CD4-positive, alpha-beta T cell (primary cell): ENCODE measurements at regions of chr14 and their contacts with region 1.

Region 1: GRCh38 chr14:70972107-70972976 is 65.1 kb downstream of the PCNX1 start:
- DNase-seq: peak; percentile 68 to 92 (median 82)
- ATAC-seq: peak; percentile 80
- H3K4me3 ChIP-seq: no peak overlapping the region
- H3K4me3 Mint-ChIP-seq: no peak overlapping the region
- H3K27ac ChIP-seq: peak overlapping the region in 1 of 2 donors; percentile 18
- H3K27ac Mint-ChIP-seq: peak overlapping the region; percentile 20
- H3K4me1 ChIP-seq: peaks cover 23% of the 10 kb centered on the region
- H3K4me1 Mint-ChIP-seq: peaks cover 56% of the 10 kb centered on the region
- H3K27me3 ChIP-seq: no peaks in the 10 kb centered on the region
- H3K27me3 Mint-ChIP-seq: no peaks in the 10 kb centered on the region
- CTCF ChIP-seq: peak; percentile 87

Region 2: GRCh38 chr14:69818757-69819191 is 1153.6 kb before region 1 on chr14:
- CTCF ChIA-PET with region 1: no interaction called
- POLR2A ChIA-PET with region 1: no interaction called
- intact Hi-C with region 1: loop called (anchors 5 kb)
- DNase-seq: peak in 13 of 14 experiments; percentile 11 to 81 (median 37)
- ATAC-seq: peak; percentile 77
- H3K4me3 ChIP-seq: no peak overlapping the region
- H3K4me3 Mint-ChIP-seq: no peak overlapping the region
- H3K27ac ChIP-seq: no peak overlapping the region
- H3K27ac Mint-ChIP-seq: no peak overlapping the region
- H3K4me1 ChIP-seq: peaks cover 5% of the 10 kb centered on the region
- H3K4me1 Mint-ChIP-seq: peaks cover 6% of the 10 kb centered on the region
- H3K27me3 ChIP-seq: no peaks in the 10 kb centered on the region
- H3K27me3 Mint-ChIP-seq: peaks cover 8% of the 10 kb centered on the region
- CTCF ChIP-seq: peak; percentile 83

Region 3: GRCh38 chr14:70162358-70162757 is 810.0 kb before region 1 on chr14:
- CTCF ChIA-PET with region 1: no interaction called
- POLR2A ChIA-PET with region 1: no interaction called
- intact Hi-C with region 1: no loop called
- DNase-seq: no peak
- ATAC-seq: no peak
- H3K4me3 ChIP-seq: no peak overlapping the region
- H3K4me3 Mint-ChIP-seq: no peak overlapping the region
- H3K27ac ChIP-seq: no peak overlapping the region
- H3K27ac Mint-ChIP-seq: no peak overlapping the region
- H3K4me1 ChIP-seq: no peaks in the 10 kb centered on the region
- H3K4me1 Mint-ChIP-seq: no peaks in the 10 kb centered on the region
- H3K27me3 ChIP-seq: peaks cover 3 to 6% of the 10 kb centered on the region in 2 experiments
- H3K27me3 Mint-ChIP-seq: peaks cover 19% of the 10 kb centered on the region
- CTCF ChIP-seq: no peak

Region 4: DNA sequence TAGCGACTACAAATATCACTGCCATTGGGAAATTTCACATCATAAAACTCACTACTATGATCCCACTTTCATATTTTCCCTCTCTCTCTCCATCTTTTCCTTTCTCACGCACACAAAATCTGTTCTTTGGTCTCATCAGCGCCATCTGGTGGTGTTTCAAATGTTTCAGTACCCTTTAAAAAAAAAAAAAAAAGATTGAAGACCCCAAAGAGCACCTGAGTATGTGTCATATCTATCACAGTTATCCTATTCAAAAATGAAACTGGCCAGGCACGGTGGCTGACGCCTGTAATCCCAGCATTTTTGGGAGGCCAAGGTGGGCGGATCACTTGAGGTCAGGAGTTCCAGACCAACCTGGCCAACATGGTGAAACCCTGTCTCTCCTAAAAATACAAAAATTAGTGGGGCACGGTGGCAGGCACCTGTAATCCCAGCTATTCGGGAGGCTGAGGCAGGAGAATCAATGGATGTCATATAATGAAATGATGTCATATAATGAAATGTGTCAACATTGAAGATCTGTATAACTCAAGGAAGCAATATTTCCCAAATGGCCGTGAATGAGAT is 258.2 kb before region 1 on chr14:
- CTCF ChIA-PET with region 1: no interaction called
- POLR2A ChIA-PET with region 1: no interaction called
- intact Hi-C with region 1: loop called in 1 of 2 experiments (anchors 5 kb)
- DNase-seq: peak in 12 of 14 experiments; percentile 12 to 84 (median 36)
- ATAC-seq: no peak
- H3K4me3 ChIP-seq: no peak overlapping the region
- H3K4me3 Mint-ChIP-seq: no peak overlapping the region
- H3K27ac ChIP-seq: no peak overlapping the region
- H3K27ac Mint-ChIP-seq: no peak overlapping the region
- H3K4me1 ChIP-seq: peaks cover 5% of the 10 kb centered on the region
- H3K4me1 Mint-ChIP-seq: peaks cover 5% of the 10 kb centered on the region
- H3K27me3 ChIP-seq: no peaks in the 10 kb centered on the region
- H3K27me3 Mint-ChIP-seq: no peaks in the 10 kb centered on the region
- CTCF ChIP-seq: peak; percentile 95

Region 5: GRCh38 chr14:70816525-70816924 is 155.8 kb before region 1 on chr14:
- CTCF ChIA-PET with region 1: interaction called, 21 read pairs
- POLR2A ChIA-PET with region 1: interaction called, 3 read pairs
- intact Hi-C with region 1: loop called (anchors 1 kb)
- DNase-seq: no peak
- ATAC-seq: no peak
- H3K4me3 ChIP-seq: no peak overlapping the region
- H3K4me3 Mint-ChIP-seq: no peak overlapping the region
- H3K27ac ChIP-seq: no peak overlapping the region
- H3K27ac Mint-ChIP-seq: no peak overlapping the region
- H3K4me1 ChIP-seq: peaks cover 5% of the 10 kb centered on the region
- H3K4me1 Mint-ChIP-seq: peaks cover 15% of the 10 kb centered on the region
- H3K27me3 ChIP-seq: peaks cover 5 to 7% of the 10 kb centered on the region in 2 experiments
- H3K27me3 Mint-ChIP-seq: peaks cover 28% of the 10 kb centered on the region
- CTCF ChIP-seq: no peak

Region 6: DNA sequence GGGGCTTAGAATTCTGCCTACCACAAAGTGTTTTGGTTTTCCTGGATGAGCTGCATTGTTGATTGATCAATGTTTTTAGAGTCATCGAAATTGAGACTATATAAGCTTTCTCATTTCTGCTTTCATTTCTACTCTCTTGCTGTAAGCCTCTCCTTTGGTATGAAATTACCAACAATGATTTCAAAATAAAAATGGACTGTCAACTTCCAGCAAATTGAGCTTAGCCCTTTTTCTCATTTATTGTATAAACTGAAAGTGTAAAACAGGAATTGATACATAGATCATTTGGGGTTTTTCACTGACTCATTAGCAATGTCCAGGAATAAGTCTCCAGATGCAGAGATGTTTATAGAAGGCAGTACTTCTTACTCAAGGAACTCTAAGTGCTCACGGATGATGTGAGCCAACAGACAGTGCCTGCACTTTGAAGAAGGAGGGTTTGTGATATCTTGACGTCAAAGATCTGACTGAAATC is 85.1 kb before region 1 on chr14:
- CTCF ChIA-PET with region 1: interaction called, 10 read pairs
- POLR2A ChIA-PET with region 1: no interaction called
- intact Hi-C with region 1: no loop called
- DNase-seq: peak in 3 of 14 experiments; percentile 33 to 59 (median 46)
- ATAC-seq: peak; percentile 52
- H3K4me3 ChIP-seq: peak overlapping the region; percentile 2
- H3K4me3 Mint-ChIP-seq: peak overlapping the region; percentile 65
- H3K27ac ChIP-seq: peak overlapping the region in 1 of 2 donors; percentile 52
- H3K27ac Mint-ChIP-seq: peak overlapping the region; percentile 87
- H3K4me1 ChIP-seq: peaks cover 68% of the 10 kb centered on the region
- H3K4me1 Mint-ChIP-seq: peaks cover 87% of the 10 kb centered on the region
- H3K27me3 ChIP-seq: no peaks in the 10 kb centered on the region
- H3K27me3 Mint-ChIP-seq: no peaks in the 10 kb centered on the region
- CTCF ChIP-seq: no peak

Region 7: GRCh38 chr14:70999117-70999516 is 26.8 kb after region 1 on chr14:
- CTCF ChIA-PET with region 1: interaction called, 11 read pairs
- POLR2A ChIA-PET with region 1: interaction called, 3 read pairs
- intact Hi-C with region 1: no loop called
- DNase-seq: peak in 3 of 14 experiments; percentile 52 to 85 (median 56)
- ATAC-seq: peak; percentile 89
- H3K4me3 ChIP-seq: peak overlapping the region; percentile 10
- H3K4me3 Mint-ChIP-seq: peak overlapping the region; percentile 56
- H3K27ac ChIP-seq: peak overlapping the region; percentile 42 to 64
- H3K27ac Mint-ChIP-seq: peak overlapping the region; percentile 79
- H3K4me1 ChIP-seq: peaks cover 25% of the 10 kb centered on the region
- H3K4me1 Mint-ChIP-seq: peaks cover 89% of the 10 kb centered on the region
- H3K27me3 ChIP-seq: no peaks in the 10 kb centered on the region
- H3K27me3 Mint-ChIP-seq: no peaks in the 10 kb centered on the region
- CTCF ChIP-seq: no peak

Region 8: DNA sequence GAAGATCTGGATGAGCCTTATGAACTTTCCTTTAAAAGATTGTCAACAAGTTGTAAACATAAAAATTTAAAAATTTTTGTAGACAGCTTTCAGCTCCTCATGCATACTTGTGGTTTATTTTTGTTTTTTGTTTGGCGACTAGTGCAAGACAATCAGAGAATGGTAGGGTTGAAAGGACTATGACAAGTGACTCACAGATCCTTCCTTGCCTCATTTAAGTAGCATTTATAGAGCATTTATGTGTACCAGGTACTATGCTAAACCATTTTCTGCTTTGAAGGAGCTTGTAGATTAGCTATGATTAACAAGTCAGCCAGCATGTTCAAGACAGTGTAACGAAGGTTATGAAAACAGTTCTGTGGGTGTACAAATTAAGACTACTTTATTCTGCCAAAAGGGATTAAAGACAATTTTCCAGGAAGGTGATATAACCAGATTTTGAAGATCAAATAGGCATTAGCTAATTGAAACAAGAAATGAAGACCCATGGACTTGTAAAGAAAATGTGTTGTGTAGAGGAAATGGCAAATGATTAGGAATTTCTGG is 57.0 kb after region 1 on chr14:
- CTCF ChIA-PET with region 1: no interaction called
- POLR2A ChIA-PET with region 1: no interaction called
- intact Hi-C with region 1: no loop called
- DNase-seq: no peak
- ATAC-seq: no peak
- H3K4me3 ChIP-seq: no peak overlapping the region
- H3K4me3 Mint-ChIP-seq: no peak overlapping the region
- H3K27ac ChIP-seq: no peak overlapping the region
- H3K27ac Mint-ChIP-seq: peak overlapping the region; percentile 31
- H3K4me1 ChIP-seq: no peaks in the 10 kb centered on the region
- H3K4me1 Mint-ChIP-seq: no peaks in the 10 kb centered on the region
- H3K27me3 ChIP-seq: no peaks in the 10 kb centered on the region
- H3K27me3 Mint-ChIP-seq: no peaks in the 10 kb centered on the region
- CTCF ChIP-seq: no peak

Region 9: GRCh38 chr14:71467361-71467811 is 495.0 kb after region 1 on chr14:
- CTCF ChIA-PET with region 1: no interaction called
- POLR2A ChIA-PET with region 1: no interaction called
- intact Hi-C with region 1: no loop called
- DNase-seq: no peak
- ATAC-seq: no peak
- H3K4me3 ChIP-seq: no peak overlapping the region
- H3K4me3 Mint-ChIP-seq: no peak overlapping the region
- H3K27ac ChIP-seq: no peak overlapping the region
- H3K27ac Mint-ChIP-seq: no peak overlapping the region
- H3K4me1 ChIP-seq: peaks cover 5% of the 10 kb centered on the region
- H3K4me1 Mint-ChIP-seq: peaks cover 22% of the 10 kb centered on the region
- H3K27me3 ChIP-seq: no peaks in the 10 kb centered on the region
- H3K27me3 Mint-ChIP-seq: no peaks in the 10 kb centered on the region
- CTCF ChIP-seq: no peak